ENCODE measurements at regions of chr14 and their contacts with region 1.

Region 1: DNA sequence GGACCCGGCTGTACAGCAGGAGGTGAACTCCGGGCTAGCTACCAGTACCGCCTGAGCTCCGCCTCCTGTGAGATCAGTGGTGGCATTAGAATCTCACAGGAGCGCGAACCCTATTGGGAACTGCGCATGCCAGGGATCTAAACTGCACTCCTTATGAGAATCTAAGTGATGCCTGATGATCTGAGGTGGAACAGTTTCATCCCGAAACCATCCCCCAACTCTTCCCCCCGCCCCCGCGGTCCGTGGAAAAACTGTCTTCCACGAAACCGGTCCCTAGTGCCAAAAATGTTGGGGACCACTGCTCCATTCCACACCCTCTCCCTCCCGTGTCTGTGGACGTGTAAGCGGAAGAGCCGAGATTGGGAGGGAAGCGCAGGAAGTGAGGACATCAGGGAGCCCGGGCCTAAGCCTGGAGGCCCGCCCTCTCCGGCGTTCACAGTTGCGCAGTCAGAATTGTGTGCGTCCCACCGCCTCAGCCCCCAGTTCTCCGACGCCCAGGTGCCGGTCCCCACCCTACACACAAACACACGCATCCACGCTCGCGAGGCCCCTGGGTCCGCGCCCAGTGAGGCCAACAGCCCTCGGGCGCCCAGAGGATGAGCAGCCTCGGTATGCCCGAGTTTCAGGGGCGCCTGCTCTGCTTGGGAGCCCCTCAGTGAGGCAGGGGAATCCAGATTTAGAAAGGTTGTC is 1.8 kb upstream of the RNASE4 start:
- DNase-seq: peak; percentile 94
- ATAC-seq: peak; percentile 74
- H3K4me3 ChIP-seq: peak overlapping the region; percentile 83 to 89 (median 89)
- H3K27ac ChIP-seq: peak overlapping the region; percentile 97
- H3K4me1 ChIP-seq: peaks cover 22% of the 10 kb centered on the region
- H3K27me3 ChIP-seq: peaks cover 0 to 5% of the 10 kb centered on the region in 2 experiments; a peak in 1 of 5 replicates
- CTCF ChIP-seq: 0 out of 2 replicates have a peak, but pooled peaks have one; percentile 8
- EP300 ChIP-seq: no peak
- POLR2A ChIP-seq: peak; percentile 82 to 84
- RAD21 ChIP-seq: 0 out of 2 replicates have a peak, but pooled peaks have one; percentile 5

Region 2: DNA sequence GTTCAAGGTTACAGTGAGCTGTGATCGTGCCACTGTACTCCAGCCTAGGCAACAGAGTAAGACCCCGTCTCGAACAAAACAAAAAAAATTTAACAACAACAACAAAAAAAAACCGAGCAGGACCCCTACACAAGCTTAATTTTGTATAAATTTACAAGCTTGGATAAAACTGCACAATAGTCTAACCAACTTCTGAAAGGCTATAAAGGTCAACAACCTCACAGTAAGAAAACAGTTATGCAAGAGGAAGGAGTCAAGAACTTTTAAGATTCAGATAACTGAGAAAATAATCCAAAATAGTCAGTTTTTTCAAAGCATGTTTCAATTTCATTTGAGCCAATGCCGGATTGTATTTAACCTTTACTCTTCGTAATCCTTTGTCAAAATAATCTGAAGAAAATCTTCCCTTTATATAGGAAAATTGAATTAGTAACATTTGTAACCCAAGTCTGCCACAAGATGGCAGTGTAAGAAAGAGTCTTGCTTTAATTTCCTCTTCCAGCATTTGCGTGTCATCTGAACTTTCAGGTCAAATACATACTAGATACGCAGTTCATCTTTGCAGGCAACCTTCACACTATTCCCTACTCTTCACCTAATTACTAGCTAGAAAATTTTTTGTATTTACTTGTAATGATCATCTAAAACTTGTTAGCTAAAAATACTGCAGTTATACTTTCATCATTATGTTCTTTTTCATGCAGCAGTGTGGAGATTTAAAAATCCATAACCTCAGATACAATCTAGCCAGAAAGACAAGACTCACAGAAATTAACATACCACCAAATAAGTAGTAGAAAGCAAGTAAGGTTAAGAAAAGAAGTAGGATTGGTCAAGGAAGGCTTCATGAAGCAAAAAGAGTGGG is 355.3 kb before region 1 on chr14:
- CTCF ChIA-PET with region 1: no interaction called
- POLR2A ChIA-PET with region 1: no interaction called
- in situ Hi-C with region 1: loop called (anchors 10 kb)
- intact Hi-C with region 1: no loop called
- DNase-seq: peak; percentile 79
- ATAC-seq: peak; percentile 54; the same call in 2 of the 3 replicates
- H3K4me3 ChIP-seq: no peak overlapping the region
- H3K27ac ChIP-seq: peak overlapping the region; percentile 4
- H3K4me1 ChIP-seq: peaks cover 49% of the 10 kb centered on the region
- H3K27me3 ChIP-seq: no peaks in the 10 kb centered on the region
- CTCF ChIP-seq: peak; percentile 84
- EP300 ChIP-seq: no peak
- POLR2A ChIP-seq: no peak
- RAD21 ChIP-seq: peak; percentile 81

Region 3: GRCh38 chr14:20343092-20343861 is 339.3 kb before region 1 on chr14 and contains the start of gene PARP2:
- CTCF ChIA-PET with region 1: no interaction called
- POLR2A ChIA-PET with region 1: interaction called, 90 read pairs
- in situ Hi-C with region 1: no loop called
- intact Hi-C with region 1: loop called (anchors 1 kb)
- DNase-seq: peak; percentile 100
- ATAC-seq: peak; percentile 99
- H3K4me3 ChIP-seq: peak within 1 kb of the TSS; percentile 82 to 88 (median 86)
- H3K27ac ChIP-seq: peak within 1 kb of the TSS; percentile 89
- H3K4me1 ChIP-seq: peaks cover 24% of the 10 kb centered on the region
- H3K27me3 ChIP-seq: no peaks in the 10 kb centered on the region; a peak in 1 of 5 replicates
- CTCF ChIP-seq: peak; percentile 25; the same call in 1 of the 2 replicates
- EP300 ChIP-seq: no peak; a peak in 1 of 4 replicates
- POLR2A ChIP-seq: peak; percentile 82 to 99
- RAD21 ChIP-seq: peak; percentile 42; the same call in 1 of the 2 replicates
- total RNA-seq, gene PARP2: 37.3 and 39.1 TPM in 2 replicates

Region 4: DNA sequence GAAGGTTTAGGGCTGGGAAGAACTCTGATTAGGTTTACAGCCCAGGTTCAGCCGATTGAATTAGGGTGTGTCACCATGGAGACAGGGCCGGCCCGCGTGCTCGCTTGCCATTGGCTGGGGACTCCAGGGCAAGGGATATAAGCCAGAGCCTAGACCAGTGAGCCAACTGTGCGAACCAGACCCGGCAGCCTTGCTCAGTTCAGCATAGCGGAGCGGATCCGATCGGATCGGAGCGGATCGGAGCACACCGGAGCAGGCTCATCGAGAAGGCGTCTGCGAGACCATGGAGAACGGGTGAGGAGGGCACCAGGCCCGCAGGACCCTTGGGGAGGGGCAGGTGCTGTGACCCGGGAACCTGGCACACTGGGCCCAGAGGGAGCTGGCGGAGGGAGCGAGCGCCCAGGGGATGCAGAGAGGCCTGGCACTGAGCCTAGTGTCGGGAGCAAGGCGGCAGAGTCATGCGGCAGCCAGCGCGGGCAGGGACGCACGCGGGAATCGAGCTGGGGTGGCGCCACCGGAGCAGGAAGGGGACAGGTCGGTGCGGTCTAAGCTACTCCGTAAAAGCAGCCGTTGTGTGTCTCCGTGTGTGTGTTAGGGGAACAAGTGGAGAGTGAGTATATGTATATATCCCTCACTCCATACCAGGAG is 213.2 kb before region 1 on chr14 and contains the start of gene PNP:
- CTCF ChIA-PET with region 1: no interaction called
- POLR2A ChIA-PET with region 1: interaction called, 4 read pairs
- in situ Hi-C with region 1: loop called (anchors 5 kb)
- intact Hi-C with region 1: loop called (anchors 1 kb)
- DNase-seq: peak; percentile 88
- ATAC-seq: peak; percentile 97
- H3K4me3 ChIP-seq: peak within 1 kb of the TSS; percentile 54 to 93 (median 74)
- H3K27ac ChIP-seq: peak within 1 kb of the TSS; percentile 53
- H3K4me1 ChIP-seq: peaks cover 52% of the 10 kb centered on the region
- H3K27me3 ChIP-seq: no peaks in the 10 kb centered on the region
- CTCF ChIP-seq: peak; percentile 48
- EP300 ChIP-seq: no peak
- POLR2A ChIP-seq: peak; percentile 100
- RAD21 ChIP-seq: peak; percentile 60; the same call in 1 of the 2 replicates
- total RNA-seq, gene PNP: 74.8 and 117 TPM in 2 replicates

Region 5: GRCh38 chr14:20632682-20633428 is 49.7 kb before region 1 on chr14:
- CTCF ChIA-PET with region 1: no interaction called
- POLR2A ChIA-PET with region 1: interaction called, 99 read pairs
- in situ Hi-C with region 1: loop called (anchors 5 kb)
- intact Hi-C with region 1: loop called (anchors 1 kb)
- DNase-seq: peak; percentile 93
- ATAC-seq: peak; percentile 79
- H3K4me3 ChIP-seq: peak overlapping the region; percentile 69 to 78 (median 77)
- H3K27ac ChIP-seq: peak overlapping the region; percentile 16
- H3K4me1 ChIP-seq: peaks cover 34% of the 10 kb centered on the region
- H3K27me3 ChIP-seq: no peaks in the 10 kb centered on the region; a peak in 1 of 5 replicates
- CTCF ChIP-seq: no peak
- EP300 ChIP-seq: 0 out of 4 replicates have a peak, but pooled peaks of 1 of the 2 experiments have one; percentile 9
- POLR2A ChIP-seq: no peak
- RAD21 ChIP-seq: no peak

Region 6: DNA sequence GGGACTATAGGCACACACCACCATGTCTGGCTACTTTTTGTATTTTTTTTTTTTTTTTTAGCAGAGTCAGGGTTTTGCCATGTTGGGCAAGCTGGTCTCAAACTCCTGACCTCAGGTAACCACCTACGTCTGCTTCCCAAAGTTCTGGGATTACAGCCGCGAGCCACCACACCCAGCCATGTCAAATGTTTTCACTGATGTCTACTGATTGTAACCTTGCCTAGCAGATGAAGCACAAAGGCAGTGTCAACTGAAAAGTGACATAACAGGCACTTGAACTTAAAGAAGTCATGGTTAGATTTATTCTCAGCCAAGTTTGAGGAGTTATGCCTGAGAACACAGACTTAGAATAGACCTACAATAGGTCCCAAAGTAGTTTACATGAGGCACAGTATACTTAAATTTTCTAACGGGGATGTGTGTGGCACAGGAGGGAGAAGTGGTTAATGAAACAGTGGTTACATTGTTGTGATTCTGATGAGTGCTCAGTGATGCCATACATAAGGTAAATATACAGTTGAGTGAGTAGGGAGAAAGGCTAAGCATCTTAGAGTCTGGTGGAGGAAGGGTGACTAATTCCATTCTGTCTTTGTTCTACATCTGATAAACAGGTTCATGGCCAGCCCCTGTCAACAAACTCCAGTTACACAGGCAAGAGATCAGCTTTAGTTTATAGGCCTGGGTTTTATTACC is 10.8 kb before region 1 on chr14:
- CTCF ChIA-PET with region 1: interaction called, 3 read pairs
- POLR2A ChIA-PET with region 1: interaction called, 141 read pairs
- in situ Hi-C with region 1: no loop called
- intact Hi-C with region 1: loop called (anchors 1 kb)
- DNase-seq: peak; percentile 96
- ATAC-seq: peak; percentile 85
- H3K4me3 ChIP-seq: no peak overlapping the region
- H3K27ac ChIP-seq: peak overlapping the region; percentile 69
- H3K4me1 ChIP-seq: peaks cover 70% of the 10 kb centered on the region
- H3K27me3 ChIP-seq: no peaks in the 10 kb centered on the region
- CTCF ChIP-seq: no peak
- EP300 ChIP-seq: peak in 1 of 2 experiments; percentile 88; a peak in 2 of 4 replicates
- POLR2A ChIP-seq: no peak
- RAD21 ChIP-seq: no peak

Region 7: GRCh38 chr14:20848316-20848954 is 165.9 kb after region 1 on chr14:
- CTCF ChIA-PET with region 1: no interaction called
- POLR2A ChIA-PET with region 1: no interaction called
- in situ Hi-C with region 1: no loop called
- intact Hi-C with region 1: no loop called
- DNase-seq: no peak
- ATAC-seq: peak; percentile 49
- H3K4me3 ChIP-seq: no peak overlapping the region
- H3K27ac ChIP-seq: no peak overlapping the region
- H3K4me1 ChIP-seq: peaks cover 13% of the 10 kb centered on the region
- H3K27me3 ChIP-seq: no peaks in the 10 kb centered on the region
- CTCF ChIP-seq: no peak
- EP300 ChIP-seq: no peak
- POLR2A ChIP-seq: no peak
- RAD21 ChIP-seq: no peak